ENCODE measurements at regions of chr14 and their contacts with region 1.

Region 1: DNA sequence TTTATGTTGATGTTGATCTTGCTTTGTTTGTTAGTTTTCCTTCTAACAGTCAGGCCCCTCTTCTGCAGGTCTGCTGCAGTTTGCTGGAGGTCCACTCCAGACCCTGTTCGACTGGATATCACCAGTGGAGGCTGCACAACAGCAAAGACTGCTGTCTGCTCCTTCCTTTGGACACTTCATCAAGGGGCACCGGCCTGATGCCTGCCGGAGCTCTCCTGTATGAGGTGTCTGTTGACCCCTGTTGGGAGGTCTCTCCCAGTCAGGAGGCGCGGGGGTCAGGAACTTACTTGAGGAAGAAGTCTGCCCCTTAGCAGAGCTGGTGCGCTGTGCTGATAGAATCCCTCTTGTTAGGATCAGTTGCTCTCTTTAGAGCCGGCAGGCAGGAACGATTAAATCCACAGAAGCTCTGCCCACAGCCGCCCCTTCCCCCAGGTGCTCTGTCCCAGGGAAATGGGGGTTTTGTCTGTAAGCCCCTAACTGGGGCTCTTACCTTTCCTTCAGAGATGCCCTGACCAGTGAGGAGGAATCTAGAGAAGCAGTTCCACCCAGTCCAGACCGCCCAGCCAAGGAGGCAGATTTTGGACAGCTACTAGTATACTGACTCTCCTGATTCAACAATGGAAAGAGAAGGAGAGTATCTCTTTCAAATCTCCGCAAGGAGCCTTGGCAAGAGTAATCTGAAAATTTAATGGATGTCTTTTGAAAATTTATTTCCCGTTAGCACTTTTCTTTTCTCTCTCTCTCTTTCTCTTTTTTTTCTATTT is 25.2 kb downstream of the MIA2 start:
- DNase-seq: no peak
- ATAC-seq: no peak
- H3K4me3 ChIP-seq: no peak overlapping the region
- H3K27ac ChIP-seq: no peak overlapping the region
- H3K4me1 ChIP-seq: no peaks in the 10 kb centered on the region
- H3K27me3 ChIP-seq: no peaks in the 10 kb centered on the region
- CTCF ChIP-seq: no peak
- POLR2A ChIP-seq: no peak

Region 2: DNA sequence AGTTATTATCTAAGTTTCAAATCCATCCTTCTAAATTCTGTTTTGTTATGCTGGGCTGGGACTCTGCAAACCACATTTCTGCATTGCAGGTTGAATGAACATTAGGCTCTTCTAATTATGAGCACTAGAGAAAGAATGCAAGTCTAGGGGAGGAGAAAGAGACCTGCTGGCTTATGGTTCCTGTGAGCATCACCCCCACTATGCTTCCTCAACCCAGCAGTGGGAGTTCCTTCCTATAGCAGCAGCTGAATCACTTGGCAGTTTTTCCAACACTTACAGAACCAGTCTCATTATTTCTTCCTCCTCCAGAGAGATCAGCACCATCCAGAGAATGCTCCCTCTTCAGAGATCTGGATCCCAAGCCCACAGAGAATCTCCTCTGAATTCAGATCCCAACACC is 705.4 kb before region 1 on chr14:
- intact Hi-C with region 1: no loop called
- DNase-seq: no peak
- ATAC-seq: no peak
- H3K4me3 ChIP-seq: no peak overlapping the region
- H3K27ac ChIP-seq: no peak overlapping the region
- H3K4me1 ChIP-seq: no peaks in the 10 kb centered on the region
- H3K27me3 ChIP-seq: no peaks in the 10 kb centered on the region
- CTCF ChIP-seq: no peak
- POLR2A ChIP-seq: no peak

Region 3: DNA sequence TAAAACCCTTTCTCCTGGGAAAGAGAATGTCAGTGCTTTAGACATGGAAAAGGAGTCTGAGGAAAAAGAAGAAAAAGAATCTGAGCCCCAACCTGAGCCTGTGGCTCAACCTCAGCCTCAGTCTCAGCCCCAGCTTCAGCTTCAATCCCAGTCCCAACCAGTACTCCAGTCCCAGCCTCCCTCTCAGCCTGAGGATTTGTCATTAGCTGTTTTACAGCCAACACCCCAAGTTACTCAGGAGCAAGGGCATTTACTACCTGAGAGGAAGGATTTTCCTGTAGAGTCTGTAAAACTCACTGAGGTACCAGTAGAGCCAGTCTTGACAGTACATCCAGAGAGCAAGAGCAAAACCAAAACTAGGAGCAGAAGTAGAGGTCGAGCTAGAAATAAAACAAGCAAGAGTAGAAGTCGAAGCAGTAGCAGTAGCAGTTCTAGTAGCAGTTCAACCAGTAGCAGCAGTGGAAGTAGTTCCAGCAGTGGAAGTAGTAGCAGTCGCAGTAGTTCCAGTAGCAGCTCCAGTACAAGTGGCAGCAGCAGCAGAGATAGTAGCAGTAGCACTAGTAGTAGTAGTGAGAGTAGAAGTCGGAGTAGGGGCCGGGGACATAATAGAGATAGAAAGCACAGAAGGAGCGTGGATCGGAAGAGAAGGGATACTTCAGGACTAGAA is 77.8 kb before region 1 on chr14:
- intact Hi-C with region 1: loop called in 2 of 10 experiments (anchors 10 kb)
- DNase-seq: no peak
- ATAC-seq: no peak
- H3K4me3 ChIP-seq: no peak overlapping the region
- H3K27ac ChIP-seq: peak overlapping the region in 1 of 12 donors; percentile 9
- H3K4me1 ChIP-seq: peaks cover 0 to 44% (median 13%) of the 10 kb centered on the region in 12 donors
- H3K27me3 ChIP-seq: no peaks in the 10 kb centered on the region
- CTCF ChIP-seq: no peak
- POLR2A ChIP-seq: no peak

Region 4: DNA sequence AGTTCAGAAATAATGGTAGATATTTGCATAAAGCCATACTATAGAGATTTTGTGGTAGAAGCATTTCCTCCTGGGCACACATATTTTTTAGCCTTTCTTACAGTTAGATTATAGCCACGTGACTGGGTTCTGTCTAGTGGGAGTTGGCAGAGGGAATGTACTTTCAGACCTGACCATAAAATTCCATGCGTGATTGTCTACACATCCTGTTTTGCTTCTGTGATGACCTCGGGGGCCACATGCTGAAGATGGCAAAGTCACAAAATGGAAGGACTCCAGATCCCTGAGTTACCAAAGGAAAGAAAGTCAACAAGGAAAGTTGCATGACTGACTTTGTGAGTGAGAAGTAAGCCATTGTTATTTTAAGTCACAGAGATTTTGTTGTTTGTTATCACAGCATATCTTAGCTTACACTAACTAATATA is 39.9 kb before region 1 on chr14:
- intact Hi-C with region 1: no loop called
- DNase-seq: no peak
- ATAC-seq: no peak
- H3K4me3 ChIP-seq: no peak overlapping the region
- H3K27ac ChIP-seq: no peak overlapping the region
- H3K4me1 ChIP-seq: peaks cover 0 to 6% (median 0%) of the 10 kb centered on the region in 12 donors
- H3K27me3 ChIP-seq: no peaks in the 10 kb centered on the region
- CTCF ChIP-seq: no peak
- POLR2A ChIP-seq: no peak

Measured in heart left ventricle (tissue), 16 donors.